PC-3 (cell line): ENCODE measurements at regions of chr5 and their contacts with region 1.

Region 1: DNA sequence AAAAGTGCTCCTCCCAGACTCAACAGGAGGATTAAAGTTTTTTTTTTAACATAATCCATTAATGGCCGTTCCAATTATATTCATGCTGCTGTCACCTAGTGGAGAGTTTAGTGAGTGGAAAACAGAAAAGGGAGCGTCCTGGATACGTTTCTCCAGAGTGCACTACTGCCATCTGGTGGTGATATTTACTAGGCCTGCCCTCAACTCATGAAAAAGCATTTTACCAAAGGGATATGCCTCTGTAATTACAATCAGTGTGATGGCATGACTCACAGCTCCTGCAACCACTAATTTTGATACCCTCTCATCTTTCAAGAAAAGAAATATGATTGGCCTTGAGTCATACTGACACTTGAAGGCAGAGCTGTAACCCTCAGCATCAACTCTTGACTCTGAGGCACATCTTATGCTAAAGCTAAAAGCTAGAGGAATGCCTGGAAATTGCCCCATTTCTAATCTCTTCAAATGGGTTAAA is 20.0 kb downstream of the MINAR2 start:
- DNase-seq: peak; percentile 87
- ATAC-seq: peak; percentile 80
- H3K4me3 ChIP-seq: no peak overlapping the region
- H3K27ac ChIP-seq: no peak overlapping the region
- H3K4me1 ChIP-seq: no peaks in the 10 kb centered on the region
- H3K27me3 ChIP-seq: no peaks in the 10 kb centered on the region
- CTCF ChIP-seq: peak; percentile 95

Region 2: GRCh38 chr5:128213340-128213739 is 1554.6 kb before region 1 on chr5:
- CTCF ChIA-PET with region 1: no interaction called
- POLR2A ChIA-PET with region 1: no interaction called
- intact Hi-C with region 1: loop called (anchors 5 kb)
- DNase-seq: peak; percentile 84
- ATAC-seq: peak; percentile 53
- H3K4me3 ChIP-seq: no peak overlapping the region
- H3K27ac ChIP-seq: no peak overlapping the region
- H3K4me1 ChIP-seq: peaks cover 13% of the 10 kb centered on the region
- H3K27me3 ChIP-seq: no peaks in the 10 kb centered on the region
- CTCF ChIP-seq: peak; percentile 97

Region 3: DNA sequence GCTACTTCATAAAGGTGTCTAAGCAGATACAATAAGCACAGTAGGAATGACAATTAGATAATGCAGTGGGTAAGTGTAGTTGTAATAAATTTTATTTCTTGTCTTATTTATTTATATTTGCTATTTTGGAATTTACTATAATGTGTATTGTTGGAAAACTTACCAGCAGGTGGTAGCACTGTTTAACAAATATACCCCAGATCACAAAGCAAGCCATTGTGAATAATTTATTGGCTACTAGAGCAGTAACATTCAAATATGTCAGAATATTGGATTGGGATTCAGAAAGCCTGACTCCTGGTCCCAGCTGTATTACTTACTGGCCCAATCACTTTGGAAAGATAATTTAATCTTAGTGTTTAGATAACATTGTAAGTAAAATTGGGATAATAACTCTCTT is 595.4 kb before region 1 on chr5:
- CTCF ChIA-PET with region 1: no interaction called
- POLR2A ChIA-PET with region 1: no interaction called
- intact Hi-C with region 1: loop called (anchors 1 kb)
- DNase-seq: peak; percentile 25
- ATAC-seq: peak; percentile 64
- H3K4me3 ChIP-seq: no peak overlapping the region
- H3K27ac ChIP-seq: no peak overlapping the region
- H3K4me1 ChIP-seq: no peaks in the 10 kb centered on the region
- H3K27me3 ChIP-seq: peaks cover 7% of the 10 kb centered on the region; the same call in 1 of the 2 replicates
- CTCF ChIP-seq: peak; percentile 51

Region 4: GRCh38 chr5:129400322-129400983 is 367.5 kb before region 1 on chr5:
- CTCF ChIA-PET with region 1: no interaction called
- POLR2A ChIA-PET with region 1: no interaction called
- intact Hi-C with region 1: loop called (anchors 5 kb)
- DNase-seq: peak; percentile 22
- ATAC-seq: no peak
- H3K4me3 ChIP-seq: no peak overlapping the region
- H3K27ac ChIP-seq: no peak overlapping the region
- H3K4me1 ChIP-seq: no peaks in the 10 kb centered on the region
- H3K27me3 ChIP-seq: peaks cover 16% of the 10 kb centered on the region; the same call in 1 of the 2 replicates
- CTCF ChIP-seq: peak; percentile 54; the same call in 1 of the 2 replicates

Region 5: GRCh38 chr5:129569295-129569694 is 198.6 kb before region 1 on chr5:
- CTCF ChIA-PET with region 1: no interaction called
- POLR2A ChIA-PET with region 1: no interaction called
- intact Hi-C with region 1: no loop called
- DNase-seq: no peak
- ATAC-seq: no peak
- H3K4me3 ChIP-seq: no peak overlapping the region
- H3K27ac ChIP-seq: no peak overlapping the region
- H3K4me1 ChIP-seq: no peaks in the 10 kb centered on the region
- H3K27me3 ChIP-seq: no peaks in the 10 kb centered on the region
- CTCF ChIP-seq: no peak

Region 6: GRCh38 chr5:129664337-129664937 is 103.5 kb before region 1 on chr5:
- CTCF ChIA-PET with region 1: no interaction called
- POLR2A ChIA-PET with region 1: no interaction called
- intact Hi-C with region 1: loop called (anchors 1 kb)
- DNase-seq: peak; percentile 69
- ATAC-seq: no peak
- H3K4me3 ChIP-seq: no peak overlapping the region
- H3K27ac ChIP-seq: no peak overlapping the region
- H3K4me1 ChIP-seq: no peaks in the 10 kb centered on the region
- H3K27me3 ChIP-seq: no peaks in the 10 kb centered on the region
- CTCF ChIP-seq: peak; percentile 82

Region 7: GRCh38 chr5:129906177-129906887 is 138.4 kb after region 1 on chr5:
- CTCF ChIA-PET with region 1: no interaction called
- POLR2A ChIA-PET with region 1: no interaction called
- intact Hi-C with region 1: no loop called
- DNase-seq: no peak
- ATAC-seq: no peak
- H3K4me3 ChIP-seq: peak overlapping the region; percentile 69
- H3K27ac ChIP-seq: no peak overlapping the region
- H3K4me1 ChIP-seq: no peaks in the 10 kb centered on the region
- H3K27me3 ChIP-seq: peaks cover 13% of the 10 kb centered on the region
- CTCF ChIP-seq: no peak

Region 8: GRCh38 chr5:130912088-130912487 is 1144.1 kb after region 1 on chr5:
- CTCF ChIA-PET with region 1: no interaction called
- POLR2A ChIA-PET with region 1: no interaction called
- intact Hi-C with region 1: loop called (anchors 10 kb)
- DNase-seq: peak; percentile 42
- ATAC-seq: no peak; the same call in 1 of the 2 replicates
- H3K4me3 ChIP-seq: no peak overlapping the region
- H3K27ac ChIP-seq: no peak overlapping the region
- H3K4me1 ChIP-seq: no peaks in the 10 kb centered on the region
- H3K27me3 ChIP-seq: no peaks in the 10 kb centered on the region
- CTCF ChIP-seq: peak; percentile 65